ENCODE measurements at regions of chr5 and their contacts with region 1.

Region 1: GRCh38 chr5:84274585-84275468 is 109.9 kb downstream of the EDIL3 start:
- H3K4me3 Mint-ChIP-seq: no peak overlapping the region
- H3K27ac Mint-ChIP-seq: no peak overlapping the region
- H3K4me1 Mint-ChIP-seq: peaks cover 7% of the 10 kb centered on the region
- H3K27me3 Mint-ChIP-seq: no peaks in the 10 kb centered on the region

Region 2: GRCh38 chr5:84242286-84242685 is 32.5 kb before region 1 on chr5:
- intact Hi-C with region 1: no loop called
- H3K4me3 Mint-ChIP-seq: no peak overlapping the region
- H3K27ac Mint-ChIP-seq: no peak overlapping the region
- H3K4me1 Mint-ChIP-seq: no peaks in the 10 kb centered on the region
- H3K27me3 Mint-ChIP-seq: no peaks in the 10 kb centered on the region

Region 3: DNA sequence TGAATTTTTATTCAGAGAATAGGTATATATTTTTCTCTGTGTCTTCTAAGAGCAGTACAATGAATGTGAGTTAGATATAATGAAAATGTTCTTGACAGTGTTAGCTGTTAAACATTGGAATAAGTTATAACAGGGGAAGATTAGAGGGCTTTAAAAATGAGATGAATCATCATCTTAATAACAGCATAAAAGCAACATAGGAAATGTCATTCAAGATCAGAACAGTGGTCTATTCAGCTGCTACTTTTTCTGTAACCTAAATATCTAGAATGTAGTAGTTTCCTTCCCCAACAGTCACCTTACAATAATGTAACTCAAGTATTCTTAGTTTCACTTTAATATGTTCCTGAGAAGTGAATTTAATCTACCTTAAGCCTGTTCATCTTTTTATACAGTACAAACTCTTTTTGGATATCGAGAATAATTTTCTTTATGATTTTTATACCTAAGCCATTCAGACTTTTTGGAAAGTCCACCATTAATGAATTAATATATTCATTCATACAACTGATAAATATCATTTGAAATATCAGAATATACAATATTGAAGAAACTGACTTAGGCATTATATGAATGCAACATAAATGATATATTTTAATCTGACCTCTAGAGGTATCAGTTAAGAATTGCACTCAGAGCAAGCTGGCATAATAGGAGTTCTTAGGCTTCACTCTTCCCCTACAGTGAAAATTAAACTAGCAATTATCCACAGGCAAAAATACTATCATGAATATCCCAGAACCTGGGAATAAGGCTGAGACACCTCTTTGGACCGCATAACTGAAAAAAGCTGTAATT is 176.0 kb after region 1 on chr5:
- intact Hi-C with region 1: loop called (anchors 10 kb)
- H3K4me3 Mint-ChIP-seq: no peak overlapping the region
- H3K27ac Mint-ChIP-seq: no peak overlapping the region
- H3K4me1 Mint-ChIP-seq: no peaks in the 10 kb centered on the region
- H3K27me3 Mint-ChIP-seq: no peaks in the 10 kb centered on the region

Region 4: GRCh38 chr5:85049020-85049419 is 774.2 kb after region 1 on chr5:
- intact Hi-C with region 1: loop called (anchors 1 kb)
- H3K4me3 Mint-ChIP-seq: no peak overlapping the region
- H3K27ac Mint-ChIP-seq: no peak overlapping the region
- H3K4me1 Mint-ChIP-seq: no peaks in the 10 kb centered on the region
- H3K27me3 Mint-ChIP-seq: no peaks in the 10 kb centered on the region